WTC11 (cell line): ENCODE measurements at regions of chr9 and their contacts with region 1.

Region 1: GRCh38 chr9:3181049-3181953 is 337.4 kb upstream of the PUM3 start:
- DNase-seq: peak; percentile 75
- ATAC-seq: peak; percentile 91
- H3K4me3 Mint-ChIP-seq: peak overlapping the region; percentile 82
- H3K27ac Mint-ChIP-seq: no peak overlapping the region
- H3K4me1 Mint-ChIP-seq: peaks cover 19% of the 10 kb centered on the region
- H3K27me3 Mint-ChIP-seq: peaks cover 41% of the 10 kb centered on the region
- CTCF ChIP-seq: no peak

Region 2: DNA sequence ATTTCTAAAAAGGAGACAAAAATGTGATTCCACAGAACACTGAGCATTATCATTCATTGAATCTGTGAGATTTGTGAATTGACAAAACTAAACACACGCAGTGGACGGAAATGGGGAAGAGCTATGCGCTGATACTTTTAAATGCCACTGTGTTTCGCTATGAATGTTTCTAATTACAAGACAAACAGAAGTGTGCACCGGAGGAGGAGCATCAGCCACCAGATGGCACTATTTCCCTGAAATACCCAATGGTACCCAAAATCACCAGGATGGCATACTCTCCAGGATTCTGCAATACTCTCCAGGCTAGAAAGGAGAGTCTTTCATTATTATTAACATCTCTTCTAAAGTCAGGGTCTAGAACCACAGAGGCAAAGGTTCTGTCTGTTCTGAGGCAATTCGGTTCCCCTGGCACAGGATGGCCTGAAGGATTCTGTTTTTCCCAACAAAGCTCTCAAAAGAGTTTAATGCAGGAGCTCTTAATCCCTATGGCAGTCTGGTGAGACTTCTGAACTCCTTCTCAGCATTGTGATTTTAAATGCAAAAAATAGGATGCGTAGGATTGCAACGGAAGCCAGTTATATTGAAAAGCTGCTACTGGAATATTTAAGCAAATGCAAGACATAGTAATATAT is 323.6 kb before region 1 on chr9:
- CTCF ChIA-PET with region 1: interaction called, 25 read pairs
- POLR2A ChIA-PET with region 1: no interaction called
- DNase-seq: peak; percentile 72
- ATAC-seq: peak; percentile 84
- H3K4me3 Mint-ChIP-seq: no peak overlapping the region
- H3K27ac Mint-ChIP-seq: no peak overlapping the region
- H3K4me1 Mint-ChIP-seq: peaks cover 10% of the 10 kb centered on the region
- H3K27me3 Mint-ChIP-seq: peaks cover 3% of the 10 kb centered on the region
- CTCF ChIP-seq: peak; percentile 69

Region 3: DNA sequence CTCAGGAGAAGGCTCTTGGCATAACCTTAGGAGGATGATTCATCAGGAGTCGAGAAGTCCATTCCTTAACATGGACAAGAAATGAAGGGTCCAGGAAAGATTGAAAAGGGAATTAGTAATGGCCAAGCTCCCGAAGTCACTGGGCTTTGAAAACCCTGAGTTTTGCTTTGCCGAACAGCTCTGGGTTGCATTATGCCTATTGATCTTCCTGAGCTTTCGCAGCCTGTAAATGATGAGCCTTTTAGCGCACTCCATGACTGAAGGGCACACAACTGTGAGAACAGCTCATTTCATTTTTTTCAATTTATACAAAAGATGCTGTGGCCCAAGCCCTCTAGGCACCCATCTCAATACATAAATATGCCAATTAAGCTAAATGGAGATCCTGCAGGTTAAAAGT is 312.4 kb before region 1 on chr9:
- CTCF ChIA-PET with region 1: interaction called, 10 read pairs
- POLR2A ChIA-PET with region 1: no interaction called
- DNase-seq: no peak
- ATAC-seq: no peak
- H3K4me3 Mint-ChIP-seq: no peak overlapping the region
- H3K27ac Mint-ChIP-seq: peak overlapping the region; percentile 41; the same call in 1 of the 2 replicates
- H3K4me1 Mint-ChIP-seq: peaks cover 10% of the 10 kb centered on the region
- H3K27me3 Mint-ChIP-seq: 0 out of 2 replicates have a peak, but pooled peaks cover 2% of the 10 kb centered on the region
- CTCF ChIP-seq: no peak

Region 4: GRCh38 chr9:2874001-2874750 is 307.1 kb before region 1 on chr9:
- CTCF ChIA-PET with region 1: interaction called, 10 read pairs
- POLR2A ChIA-PET with region 1: no interaction called
- DNase-seq: no peak
- ATAC-seq: no peak
- H3K4me3 Mint-ChIP-seq: no peak overlapping the region
- H3K27ac Mint-ChIP-seq: no peak overlapping the region
- H3K4me1 Mint-ChIP-seq: peaks cover 2% of the 10 kb centered on the region
- H3K27me3 Mint-ChIP-seq: no peaks in the 10 kb centered on the region
- CTCF ChIP-seq: no peak

Region 5: DNA sequence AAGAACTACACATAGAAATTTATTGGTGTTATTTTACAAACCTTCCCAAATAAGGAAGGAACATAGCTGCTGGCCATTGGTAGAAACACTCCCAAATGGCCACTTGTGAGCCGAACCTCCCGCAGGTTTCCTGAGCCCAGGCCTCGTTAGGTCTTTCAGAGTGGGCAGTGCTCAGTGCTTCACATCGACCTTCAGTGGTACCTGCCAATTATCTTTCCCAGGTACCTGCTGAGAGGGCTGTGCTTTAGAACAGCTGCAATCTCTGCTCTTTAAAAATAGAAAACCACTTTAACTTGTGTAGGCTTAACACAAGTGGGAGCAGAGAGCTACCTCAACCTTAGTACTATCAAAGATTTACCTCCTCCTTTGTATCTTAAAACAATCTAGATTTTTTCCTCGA is 10.4 kb after region 1 on chr9:
- CTCF ChIA-PET with region 1: interaction called, 14 read pairs
- POLR2A ChIA-PET with region 1: no interaction called
- DNase-seq: no peak
- ATAC-seq: peak; percentile 57
- H3K4me3 Mint-ChIP-seq: no peak overlapping the region
- H3K27ac Mint-ChIP-seq: no peak overlapping the region
- H3K4me1 Mint-ChIP-seq: peaks cover 57% of the 10 kb centered on the region
- H3K27me3 Mint-ChIP-seq: no peaks in the 10 kb centered on the region
- CTCF ChIP-seq: no peak